ENCODE measurements at regions of chr4 and their contacts with region 1.

Region 1: GRCh38 chr4:53455777-53456176 is 78.3 kb downstream of the FIP1L1 start:
- DNase-seq: no peak
- ATAC-seq: no peak
- H3K4me3 Mint-ChIP-seq: no peak overlapping the region
- H3K27ac Mint-ChIP-seq: no peak overlapping the region
- H3K4me1 Mint-ChIP-seq: no peaks in the 10 kb centered on the region
- H3K27me3 Mint-ChIP-seq: no peaks in the 10 kb centered on the region
- CTCF ChIP-seq: no peak

Region 2: DNA sequence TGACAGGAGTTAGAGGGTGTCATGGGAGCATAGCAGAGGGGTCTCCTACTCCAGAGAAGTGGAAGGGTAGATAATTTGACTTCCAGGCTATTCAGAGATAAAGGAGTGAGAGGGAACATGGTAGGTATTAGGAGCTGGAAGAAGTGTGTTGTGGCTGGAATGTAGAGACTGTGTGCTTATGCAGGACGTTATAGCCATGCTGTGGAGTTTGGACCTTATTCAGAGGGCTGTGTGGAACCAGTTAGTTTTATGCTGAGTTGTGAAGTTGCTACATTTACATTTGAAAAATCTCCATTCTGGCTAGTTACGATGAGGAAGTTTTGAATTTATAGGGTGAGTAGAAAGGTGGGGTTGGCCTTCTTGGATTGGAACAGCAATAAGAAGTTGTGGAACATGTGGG is 10.8 kb before region 1 on chr4:
- CTCF ChIA-PET with region 1: no interaction called
- POLR2A ChIA-PET with region 1: no interaction called
- intact Hi-C with region 1: loop called (anchors 2 kb)
- DNase-seq: no peak
- ATAC-seq: no peak
- H3K4me3 Mint-ChIP-seq: no peak overlapping the region
- H3K27ac Mint-ChIP-seq: no peak overlapping the region
- H3K4me1 Mint-ChIP-seq: no peaks in the 10 kb centered on the region
- H3K27me3 Mint-ChIP-seq: no peaks in the 10 kb centered on the region
- CTCF ChIP-seq: no peak